ENCODE measurements at regions of chr19 and their contacts with region 1.

Region 1: DNA sequence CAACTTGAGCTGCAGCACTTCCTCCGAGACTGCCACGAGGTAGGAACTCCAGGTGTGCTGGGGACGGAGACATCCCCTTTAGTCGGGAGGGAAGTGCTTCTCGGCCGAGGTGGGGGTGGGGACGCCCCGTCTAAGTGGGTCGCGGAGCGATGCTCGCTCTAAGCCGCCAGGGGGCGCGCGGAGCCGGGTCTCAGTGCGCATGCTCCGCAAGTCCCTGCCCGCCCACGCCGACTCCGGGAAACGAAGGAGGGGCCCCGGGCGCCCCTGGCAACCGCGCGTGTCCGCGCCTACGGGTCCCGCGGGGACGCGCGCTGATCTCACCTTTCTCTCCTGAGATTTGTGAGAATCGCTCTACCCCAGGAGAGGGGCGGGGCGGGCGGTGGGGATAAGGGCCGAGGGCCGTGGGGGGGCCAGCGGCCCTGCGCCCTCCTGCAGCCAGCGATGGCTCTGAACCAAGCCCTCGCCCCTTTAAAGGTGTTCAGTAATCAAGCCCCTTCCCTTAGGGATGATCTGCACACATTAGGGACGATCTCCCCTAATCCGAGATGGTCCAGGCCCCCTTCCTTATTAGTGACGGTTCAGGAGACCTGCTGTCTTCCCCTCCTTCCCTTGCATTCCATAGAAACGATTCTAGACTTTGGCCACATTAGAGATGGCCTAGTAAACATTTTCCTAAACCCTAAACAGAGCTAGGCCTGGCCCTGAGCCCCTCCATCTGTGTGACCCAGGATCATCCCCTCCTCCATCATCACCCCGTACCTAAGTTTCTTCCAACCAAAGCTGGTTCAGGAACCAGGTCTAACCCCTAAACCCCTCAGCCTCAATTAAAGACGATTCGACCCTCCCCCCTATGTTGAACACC is 47.3 kb upstream of the SHKBP1 start:
- DNase-seq: peak; percentile 93
- H3K4me3 ChIP-seq: peak overlapping the region; percentile 60 to 65 (median 64)
- H3K27ac ChIP-seq: peak overlapping the region in 3 of 4 donors; percentile 26 to 62 (median 36)
- H3K4me1 ChIP-seq: peaks cover 4 to 25% (median 22%) of the 10 kb centered on the region in 4 donors
- H3K27me3 ChIP-seq: peaks cover 0 to 5% (median 0%) of the 10 kb centered on the region in 4 donors
- CTCF ChIP-seq: peak; percentile 97 to 99 (median 98)
- EP300 ChIP-seq: no peak
- POLR2A ChIP-seq: no peak

Region 2: DNA sequence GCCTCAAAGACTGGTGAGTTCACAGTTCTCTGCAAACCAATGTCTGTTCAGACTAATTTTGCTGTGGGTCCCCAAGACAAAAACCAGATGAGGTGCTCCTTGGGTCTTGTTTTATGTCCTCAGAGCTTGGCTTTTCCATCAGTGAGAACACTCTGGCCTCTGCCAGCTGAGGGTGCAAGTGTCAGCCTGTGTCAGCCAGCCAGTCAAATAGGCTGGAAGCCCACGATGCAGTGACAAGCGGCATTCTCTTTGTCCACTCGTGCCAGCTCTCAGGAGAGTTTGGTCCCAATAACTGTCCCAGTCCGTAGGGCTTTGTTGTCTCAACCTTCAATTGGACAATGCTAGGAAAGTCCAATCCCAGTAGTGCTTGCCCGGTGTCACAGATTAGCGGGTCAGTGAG is 234.8 kb before region 1 on chr19:
- intact Hi-C with region 1: no loop called
- DNase-seq: no peak
- H3K4me3 ChIP-seq: no peak overlapping the region
- H3K27ac ChIP-seq: no peak overlapping the region
- H3K4me1 ChIP-seq: no peaks in the 10 kb centered on the region
- H3K27me3 ChIP-seq: no peaks in the 10 kb centered on the region
- CTCF ChIP-seq: no peak
- EP300 ChIP-seq: no peak
- POLR2A ChIP-seq: no peak

Region 3: GRCh38 chr19:40465557-40466150 is 63.7 kb before region 1 on chr19 and contains the start of gene BLVRB:
- intact Hi-C with region 1: loop called (anchors 2 kb)
- DNase-seq: peak; percentile 100
- H3K4me3 ChIP-seq: peak within 1 kb of the TSS; percentile 69 to 89 (median 80)
- H3K27ac ChIP-seq: peak within 1 kb of the TSS; percentile 89 to 94 (median 92)
- H3K4me1 ChIP-seq: peaks cover 27 to 53% (median 50%) of the 10 kb centered on the region in 4 donors
- H3K27me3 ChIP-seq: no peaks in the 10 kb centered on the region
- CTCF ChIP-seq: peak in 1 of 3 experiments; percentile 20
- EP300 ChIP-seq: no peak
- POLR2A ChIP-seq: peak; percentile 80
- total RNA-seq, gene BLVRB: 159 to 223 (median 194) TPM

Region 4: GRCh38 chr19:40549007-40549708 is 19.8 kb after region 1 on chr19:
- intact Hi-C with region 1: no loop called
- DNase-seq: no peak
- H3K4me3 ChIP-seq: no peak overlapping the region
- H3K27ac ChIP-seq: no peak overlapping the region
- H3K4me1 ChIP-seq: peaks cover 3 to 10% (median 7%) of the 10 kb centered on the region in 4 donors
- H3K27me3 ChIP-seq: peaks cover 0 to 26% (median 2%) of the 10 kb centered on the region in 4 donors
- CTCF ChIP-seq: peak; percentile 20 to 60 (median 50)
- EP300 ChIP-seq: no peak
- POLR2A ChIP-seq: no peak

Region 5: GRCh38 chr19:40598121-40598917 is 69.0 kb after region 1 on chr19:
- intact Hi-C with region 1: loop called (anchors 2 kb)
- DNase-seq: peak; percentile 97
- H3K4me3 ChIP-seq: peak overlapping the region in 3 of 4 donors; percentile 7 to 35 (median 27)
- H3K27ac ChIP-seq: peak overlapping the region in 2 of 4 donors; percentile 4 to 88
- H3K4me1 ChIP-seq: peaks cover 65 to 70% (median 69%) of the 10 kb centered on the region in 4 donors
- H3K27me3 ChIP-seq: peaks cover 3 to 83% (median 24%) of the 10 kb centered on the region in 4 donors
- CTCF ChIP-seq: peak in 2 of 3 experiments; percentile 96 to 97
- EP300 ChIP-seq: no peak
- POLR2A ChIP-seq: no peak

Region 6: GRCh38 chr19:40640744-40641143 is 111.4 kb after region 1 on chr19:
- intact Hi-C with region 1: loop called (anchors 5 kb)
- DNase-seq: no peak
- H3K4me3 ChIP-seq: no peak overlapping the region
- H3K27ac ChIP-seq: peak overlapping the region; percentile 19 to 67 (median 46)
- H3K4me1 ChIP-seq: peaks cover 17 to 34% (median 27%) of the 10 kb centered on the region in 4 donors
- H3K27me3 ChIP-seq: no peaks in the 10 kb centered on the region
- CTCF ChIP-seq: no peak
- EP300 ChIP-seq: no peak
- POLR2A ChIP-seq: no peak